ENCODE measurements at regions of chr2 and their contacts with region 1.

Region 1: GRCh38 chr2:86518481-86518880 is 44.8 kb downstream of the CHMP3 start:
- DNase-seq: peak; percentile 31
- H3K4me3 ChIP-seq: no peak overlapping the region
- H3K27ac ChIP-seq: no peak overlapping the region
- H3K4me1 ChIP-seq: no peaks in the 10 kb centered on the region
- H3K27me3 ChIP-seq: no peaks in the 10 kb centered on the region
- CTCF ChIP-seq: peak; percentile 27 to 50
- POLR2A ChIP-seq: no peak

Region 2: GRCh38 chr2:86552889-86553288 is 34.4 kb after region 1 on chr2:
- CTCF ChIA-PET with region 1: no interaction called
- POLR2A ChIA-PET with region 1: interaction called, 10 read pairs
- dilution Hi-C with region 1: no loop called
- intact Hi-C with region 1: no loop called
- DNase-seq: no peak
- H3K4me3 ChIP-seq: no peak overlapping the region
- H3K27ac ChIP-seq: no peak overlapping the region
- H3K4me1 ChIP-seq: no peaks in the 10 kb centered on the region
- H3K27me3 ChIP-seq: no peaks in the 10 kb centered on the region
- CTCF ChIP-seq: no peak
- POLR2A ChIP-seq: no peak

Measured in endothelial cell of umbilical vein (primary cell).